ENCODE measurements at regions of chr1 and their contacts with region 1.

Region 1: GRCh38 chr1:235513495-235514366 is 9.5 kb upstream of the B3GALNT2 start:
- DNase-seq: peak; percentile 55
- H3K4me3 ChIP-seq: peak overlapping the region in 1 of 2 experiments; percentile 28; a peak in 1 of 4 replicates
- H3K27ac ChIP-seq: no peak overlapping the region
- H3K4me1 ChIP-seq: no peaks in the 10 kb centered on the region
- H3K27me3 ChIP-seq: no peaks in the 10 kb centered on the region
- CTCF ChIP-seq: peak; percentile 96
- EP300 ChIP-seq: no peak; a peak in 1 of 4 replicates
- RAD21 ChIP-seq: peak; percentile 92

Region 2: GRCh38 chr1:235527196-235527814 is 13.6 kb after region 1 on chr1:
- CTCF ChIA-PET with region 1: interaction called, 18 read pairs
- POLR2A ChIA-PET with region 1: no interaction called
- DNase-seq: no peak
- H3K4me3 ChIP-seq: no peak overlapping the region
- H3K27ac ChIP-seq: no peak overlapping the region
- H3K4me1 ChIP-seq: no peaks in the 10 kb centered on the region
- H3K27me3 ChIP-seq: no peaks in the 10 kb centered on the region
- CTCF ChIP-seq: no peak
- EP300 ChIP-seq: no peak
- RAD21 ChIP-seq: no peak

Region 3: DNA sequence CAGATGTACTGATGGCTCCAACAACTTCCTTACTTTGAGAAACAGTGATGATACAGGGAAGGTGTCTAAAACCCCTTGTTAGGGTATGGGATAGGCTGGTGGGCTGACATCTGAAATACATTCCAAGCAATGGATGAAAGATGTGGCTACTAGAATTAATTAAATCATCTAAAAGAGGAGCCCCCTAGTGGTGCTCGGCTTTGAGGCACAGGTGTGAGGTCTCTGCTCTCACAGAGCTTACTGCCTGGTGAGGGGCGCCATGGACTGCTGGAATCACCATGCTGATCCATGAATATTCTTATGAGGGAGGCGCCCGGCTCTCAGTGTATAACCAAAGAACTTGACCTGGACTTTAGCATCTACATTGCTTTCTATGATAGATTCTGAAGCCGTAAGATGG is 87.4 kb after region 1 on chr1:
- CTCF ChIA-PET with region 1: interaction called, 10 read pairs
- POLR2A ChIA-PET with region 1: no interaction called
- DNase-seq: no peak
- H3K4me3 ChIP-seq: no peak overlapping the region
- H3K27ac ChIP-seq: no peak overlapping the region
- H3K4me1 ChIP-seq: no peaks in the 10 kb centered on the region
- H3K27me3 ChIP-seq: no peaks in the 10 kb centered on the region
- CTCF ChIP-seq: peak; percentile 52
- EP300 ChIP-seq: no peak
- RAD21 ChIP-seq: no peak

Region 4: DNA sequence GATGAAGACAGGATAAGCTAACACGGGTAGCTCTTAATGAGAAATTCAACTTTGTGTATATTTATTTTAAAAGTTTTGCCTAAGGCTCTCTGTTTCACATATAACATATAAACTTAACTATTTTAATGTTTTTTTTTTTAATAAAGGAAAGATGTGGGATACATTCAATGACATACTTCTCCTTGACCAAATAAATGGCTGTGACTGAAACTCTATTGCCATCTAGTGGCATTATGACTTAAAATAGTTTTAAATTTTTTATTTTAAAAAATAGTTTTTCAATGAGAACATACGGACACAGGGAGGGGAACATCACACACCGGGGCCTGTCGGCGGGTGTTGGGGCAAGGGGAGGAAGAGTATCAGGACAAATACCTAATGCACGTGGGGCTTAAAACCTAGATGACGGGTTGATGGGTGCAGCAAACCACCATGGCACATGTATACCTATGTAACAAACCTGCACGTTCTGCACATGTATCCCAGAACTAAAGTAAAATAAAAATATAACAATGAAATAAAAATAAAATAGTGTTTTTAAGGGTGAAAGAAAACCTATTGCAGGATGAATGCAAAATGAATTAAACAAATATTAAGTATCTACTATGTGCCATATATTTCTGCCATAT is 269.5 kb after region 1 on chr1:
- CTCF ChIA-PET with region 1: interaction called, 65 read pairs
- POLR2A ChIA-PET with region 1: no interaction called
- DNase-seq: peak; percentile 27
- H3K4me3 ChIP-seq: no peak overlapping the region
- H3K27ac ChIP-seq: peak overlapping the region in 1 of 2 experiments; percentile 48; a peak in 1 of 4 replicates
- H3K4me1 ChIP-seq: peaks cover 4 to 5% of the 10 kb centered on the region in 2 experiments; a peak in 2 of 4 replicates
- H3K27me3 ChIP-seq: no peaks in the 10 kb centered on the region
- CTCF ChIP-seq: peak; percentile 63
- EP300 ChIP-seq: no peak
- RAD21 ChIP-seq: peak; percentile 82

Region 5: GRCh38 chr1:235791532-235792060 is 277.9 kb after region 1 on chr1:
- CTCF ChIA-PET with region 1: interaction called, 17 read pairs
- POLR2A ChIA-PET with region 1: no interaction called
- DNase-seq: no peak
- H3K4me3 ChIP-seq: no peak overlapping the region
- H3K27ac ChIP-seq: no peak overlapping the region
- H3K4me1 ChIP-seq: no peaks in the 10 kb centered on the region
- H3K27me3 ChIP-seq: no peaks in the 10 kb centered on the region
- CTCF ChIP-seq: no peak
- EP300 ChIP-seq: no peak
- RAD21 ChIP-seq: no peak

Measured in SK-N-SH (cell line).